CD4-positive, alpha-beta T cell (primary cell): ENCODE measurements at regions of chr1 and their contacts with region 1.

Region 1: DNA sequence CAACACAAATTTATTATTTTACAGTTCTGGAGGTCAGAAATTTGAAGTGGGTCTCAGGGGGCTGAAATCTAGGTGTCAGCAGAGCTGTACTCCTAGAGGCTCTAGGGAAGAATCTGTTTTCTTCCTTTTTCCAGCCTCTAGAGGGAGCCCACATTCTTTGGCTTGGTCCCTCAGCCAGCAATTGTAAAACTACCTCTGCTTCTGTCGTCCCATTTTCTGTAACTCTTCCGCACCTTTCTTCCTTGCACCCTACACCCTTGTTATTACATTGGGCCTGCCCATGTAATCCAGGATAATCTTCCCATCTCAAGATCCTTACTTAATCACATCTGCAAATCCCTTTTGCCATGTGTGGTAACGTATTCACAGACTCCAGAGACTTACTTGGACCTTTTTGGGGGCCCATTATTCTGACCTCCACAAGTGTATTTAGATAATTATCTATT is 24.8 kb upstream of the THEM4 start:
- DNase-seq: peak in 12 of 14 experiments; percentile 16 to 84 (median 31)
- ATAC-seq: peak; percentile 88
- H3K4me3 ChIP-seq: no peak overlapping the region
- H3K4me3 Mint-ChIP-seq: no peak overlapping the region
- H3K27ac ChIP-seq: no peak overlapping the region
- H3K27ac Mint-ChIP-seq: no peak overlapping the region
- H3K4me1 ChIP-seq: no peaks in the 10 kb centered on the region
- H3K4me1 Mint-ChIP-seq: peaks cover 6% of the 10 kb centered on the region
- H3K27me3 ChIP-seq: no peaks in the 10 kb centered on the region
- H3K27me3 Mint-ChIP-seq: no peaks in the 10 kb centered on the region
- CTCF ChIP-seq: peak; percentile 97

Region 2: GRCh38 chr1:151673407-151673806 is 260.7 kb before region 1 on chr1:
- CTCF ChIA-PET with region 1: no interaction called
- POLR2A ChIA-PET with region 1: no interaction called
- intact Hi-C with region 1: no loop called
- DNase-seq: no peak
- ATAC-seq: no peak
- H3K4me3 ChIP-seq: no peak overlapping the region
- H3K4me3 Mint-ChIP-seq: no peak overlapping the region
- H3K27ac ChIP-seq: no peak overlapping the region
- H3K27ac Mint-ChIP-seq: no peak overlapping the region
- H3K4me1 ChIP-seq: no peaks in the 10 kb centered on the region
- H3K4me1 Mint-ChIP-seq: peaks cover 18% of the 10 kb centered on the region
- H3K27me3 ChIP-seq: no peaks in the 10 kb centered on the region
- H3K27me3 Mint-ChIP-seq: no peaks in the 10 kb centered on the region
- CTCF ChIP-seq: no peak

Region 3: DNA sequence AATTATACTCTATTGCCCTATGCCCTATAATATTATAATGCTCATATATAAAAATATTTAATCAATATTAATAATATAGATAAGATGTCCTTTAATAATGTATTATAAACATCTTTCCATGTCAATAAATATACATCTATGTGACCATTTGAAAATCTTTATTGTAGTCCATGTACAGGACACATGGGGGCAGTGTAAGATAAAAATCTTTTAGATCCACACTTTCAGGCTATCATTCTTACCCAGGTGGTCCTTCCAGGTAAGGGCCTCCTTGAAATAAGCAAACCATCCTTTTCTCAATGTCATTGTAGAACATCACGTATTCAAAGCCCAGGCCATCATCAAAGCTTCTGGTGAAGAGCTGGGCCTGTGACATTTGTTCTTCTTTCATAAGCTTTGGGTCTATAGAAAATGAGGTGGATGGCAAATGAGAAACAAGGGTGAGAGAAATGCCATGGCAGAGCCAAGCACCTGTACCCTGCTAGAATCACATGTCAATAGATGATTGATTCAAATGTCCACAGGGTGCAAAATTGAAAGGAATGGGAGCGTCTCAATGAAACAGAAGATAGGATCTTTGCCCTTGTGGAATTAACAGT is 45.0 kb before region 1 on chr1:
- CTCF ChIA-PET with region 1: interaction called, 12 read pairs
- POLR2A ChIA-PET with region 1: no interaction called
- intact Hi-C with region 1: loop called (anchors 2 kb)
- DNase-seq: peak in 3 of 14 experiments; percentile 52 to 63 (median 62)
- ATAC-seq: peak; percentile 69
- H3K4me3 ChIP-seq: no peak overlapping the region
- H3K4me3 Mint-ChIP-seq: no peak overlapping the region
- H3K27ac ChIP-seq: no peak overlapping the region
- H3K27ac Mint-ChIP-seq: peak overlapping the region; percentile 76
- H3K4me1 ChIP-seq: peaks cover 16% of the 10 kb centered on the region
- H3K4me1 Mint-ChIP-seq: peaks cover 40% of the 10 kb centered on the region
- H3K27me3 ChIP-seq: no peaks in the 10 kb centered on the region
- H3K27me3 Mint-ChIP-seq: no peaks in the 10 kb centered on the region
- CTCF ChIP-seq: peak; percentile 68

Region 4: GRCh38 chr1:151953409-151954094 is 19.5 kb after region 1 on chr1:
- CTCF ChIA-PET with region 1: interaction called, 10 read pairs
- POLR2A ChIA-PET with region 1: no interaction called
- intact Hi-C with region 1: no loop called
- DNase-seq: no peak
- ATAC-seq: no peak
- H3K4me3 ChIP-seq: no peak overlapping the region
- H3K4me3 Mint-ChIP-seq: no peak overlapping the region
- H3K27ac ChIP-seq: no peak overlapping the region
- H3K27ac Mint-ChIP-seq: no peak overlapping the region
- H3K4me1 ChIP-seq: peaks cover 2% of the 10 kb centered on the region
- H3K4me1 Mint-ChIP-seq: no peaks in the 10 kb centered on the region
- H3K27me3 ChIP-seq: no peaks in the 10 kb centered on the region
- H3K27me3 Mint-ChIP-seq: no peaks in the 10 kb centered on the region
- CTCF ChIP-seq: no peak

Region 5: GRCh38 chr1:151993654-151994496 is 59.8 kb after region 1 on chr1 and contains the start of gene S100A10:
- CTCF ChIA-PET with region 1: interaction called, 39 read pairs
- POLR2A ChIA-PET with region 1: interaction called, 5 read pairs
- intact Hi-C with region 1: loop called in 1 of 2 experiments (anchors 1 kb)
- DNase-seq: peak; percentile 63 to 91 (median 80)
- ATAC-seq: peak; percentile 88
- H3K4me3 ChIP-seq: peak within 1 kb of the TSS; percentile 95
- H3K4me3 Mint-ChIP-seq: peak within 1 kb of the TSS; percentile 94
- H3K27ac ChIP-seq: peak within 1 kb of the TSS; percentile 82 to 92
- H3K27ac Mint-ChIP-seq: peak within 1 kb of the TSS; percentile 91
- H3K4me1 ChIP-seq: peaks cover 53% of the 10 kb centered on the region
- H3K4me1 Mint-ChIP-seq: peaks cover 58% of the 10 kb centered on the region
- H3K27me3 ChIP-seq: no peaks in the 10 kb centered on the region
- H3K27me3 Mint-ChIP-seq: no peaks in the 10 kb centered on the region
- CTCF ChIP-seq: no peak
- total RNA-seq, gene S100A10: 189 to 204 TPM

Region 6: GRCh38 chr1:152189657-152190442 is 255.8 kb after region 1 on chr1:
- CTCF ChIA-PET with region 1: no interaction called
- POLR2A ChIA-PET with region 1: no interaction called
- intact Hi-C with region 1: loop called (anchors 1 to 5 kb)
- DNase-seq: peak; percentile 37 to 84 (median 58)
- ATAC-seq: peak; percentile 71
- H3K4me3 ChIP-seq: peak overlapping the region; percentile 68
- H3K4me3 Mint-ChIP-seq: peak overlapping the region; percentile 72
- H3K27ac ChIP-seq: no peak overlapping the region
- H3K27ac Mint-ChIP-seq: no peak overlapping the region
- H3K4me1 ChIP-seq: peaks cover 14% of the 10 kb centered on the region
- H3K4me1 Mint-ChIP-seq: peaks cover 10% of the 10 kb centered on the region
- H3K27me3 ChIP-seq: peaks cover 3 to 8% of the 10 kb centered on the region in 2 experiments
- H3K27me3 Mint-ChIP-seq: peaks cover 9% of the 10 kb centered on the region
- CTCF ChIP-seq: peak; percentile 83